ENCODE measurements at regions of chr4 and their contacts with region 1.

Region 1: GRCh38 chr4:154618708-154619315 is 6.4 kb upstream of the FGG start:
- DNase-seq: peak; percentile 63 to 83 (median 81)
- H3K4me3 ChIP-seq: no peak overlapping the region
- H3K27ac ChIP-seq: no peak overlapping the region
- H3K4me1 ChIP-seq: peaks cover 0 to 7% (median 4%) of the 10 kb centered on the region in 4 experiments
- H3K27me3 ChIP-seq: no peaks in the 10 kb centered on the region

Region 2: GRCh38 chr4:153822316-153822715 is 796.5 kb before region 1 on chr4:
- CTCF ChIA-PET with region 1: no interaction called
- POLR2A ChIA-PET with region 1: no interaction called
- DNase-seq: no peak
- H3K4me3 ChIP-seq: no peak overlapping the region
- H3K27ac ChIP-seq: no peak overlapping the region
- H3K4me1 ChIP-seq: no peaks in the 10 kb centered on the region
- H3K27me3 ChIP-seq: peaks cover 0 to 2% (median 1%) of the 10 kb centered on the region in 5 experiments

Region 3: GRCh38 chr4:154344686-154345085 is 274.1 kb before region 1 on chr4:
- CTCF ChIA-PET with region 1: no interaction called
- POLR2A ChIA-PET with region 1: no interaction called
- DNase-seq: no peak
- H3K4me3 ChIP-seq: no peak overlapping the region
- H3K27ac ChIP-seq: no peak overlapping the region
- H3K4me1 ChIP-seq: no peaks in the 10 kb centered on the region
- H3K27me3 ChIP-seq: no peaks in the 10 kb centered on the region

Region 4: GRCh38 chr4:154551872-154552686 is 66.7 kb before region 1 on chr4:
- CTCF ChIA-PET with region 1: interaction called, 495 read pairs
- POLR2A ChIA-PET with region 1: no interaction called
- DNase-seq: peak; percentile 78 to 89 (median 85)
- H3K4me3 ChIP-seq: no peak overlapping the region
- H3K27ac ChIP-seq: no peak overlapping the region
- H3K4me1 ChIP-seq: peaks cover 8 to 20% (median 12%) of the 10 kb centered on the region in 4 experiments
- H3K27me3 ChIP-seq: no peaks in the 10 kb centered on the region

Region 5: DNA sequence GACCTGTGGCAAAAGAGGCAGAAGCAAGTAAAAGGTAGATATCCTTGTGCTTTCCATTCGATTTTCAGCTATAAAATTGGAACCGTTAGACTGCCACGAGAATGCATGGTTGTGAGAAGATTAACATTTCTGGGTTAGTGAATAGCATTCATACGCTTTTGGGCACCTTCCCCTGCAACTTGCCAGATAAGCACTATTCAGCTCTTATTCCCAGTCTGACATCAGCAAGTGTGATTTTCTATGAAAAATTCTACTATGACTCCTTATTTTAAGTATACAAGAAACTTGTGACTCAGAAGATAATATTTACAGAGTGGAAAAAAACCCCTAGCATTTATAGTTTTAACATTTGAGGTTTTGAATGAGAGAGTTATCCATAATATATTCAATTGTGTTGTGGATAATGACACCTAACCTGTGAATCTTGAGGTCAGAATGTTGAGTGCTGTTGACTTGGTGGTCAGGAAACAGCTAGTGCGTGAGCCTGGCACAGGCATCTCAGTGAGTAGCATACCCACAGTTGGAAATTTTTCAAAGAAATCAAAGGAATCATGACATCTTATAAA is 52.1 kb before region 1 on chr4:
- CTCF ChIA-PET with region 1: interaction called, 495 read pairs
- POLR2A ChIA-PET with region 1: no interaction called
- DNase-seq: peak in 1 of 3 donors; percentile 49
- H3K4me3 ChIP-seq: no peak overlapping the region
- H3K27ac ChIP-seq: no peak overlapping the region
- H3K4me1 ChIP-seq: peaks cover 0 to 9% (median 1%) of the 10 kb centered on the region in 4 experiments
- H3K27me3 ChIP-seq: no peaks in the 10 kb centered on the region

Region 6: GRCh38 chr4:154642373-154643009 is 23.7 kb after region 1 on chr4:
- CTCF ChIA-PET with region 1: interaction called, 105 read pairs
- POLR2A ChIA-PET with region 1: no interaction called
- DNase-seq: no peak
- H3K4me3 ChIP-seq: no peak overlapping the region
- H3K27ac ChIP-seq: no peak overlapping the region
- H3K4me1 ChIP-seq: peaks cover 0 to 19% (median 5%) of the 10 kb centered on the region in 4 experiments
- H3K27me3 ChIP-seq: no peaks in the 10 kb centered on the region

Region 7: DNA sequence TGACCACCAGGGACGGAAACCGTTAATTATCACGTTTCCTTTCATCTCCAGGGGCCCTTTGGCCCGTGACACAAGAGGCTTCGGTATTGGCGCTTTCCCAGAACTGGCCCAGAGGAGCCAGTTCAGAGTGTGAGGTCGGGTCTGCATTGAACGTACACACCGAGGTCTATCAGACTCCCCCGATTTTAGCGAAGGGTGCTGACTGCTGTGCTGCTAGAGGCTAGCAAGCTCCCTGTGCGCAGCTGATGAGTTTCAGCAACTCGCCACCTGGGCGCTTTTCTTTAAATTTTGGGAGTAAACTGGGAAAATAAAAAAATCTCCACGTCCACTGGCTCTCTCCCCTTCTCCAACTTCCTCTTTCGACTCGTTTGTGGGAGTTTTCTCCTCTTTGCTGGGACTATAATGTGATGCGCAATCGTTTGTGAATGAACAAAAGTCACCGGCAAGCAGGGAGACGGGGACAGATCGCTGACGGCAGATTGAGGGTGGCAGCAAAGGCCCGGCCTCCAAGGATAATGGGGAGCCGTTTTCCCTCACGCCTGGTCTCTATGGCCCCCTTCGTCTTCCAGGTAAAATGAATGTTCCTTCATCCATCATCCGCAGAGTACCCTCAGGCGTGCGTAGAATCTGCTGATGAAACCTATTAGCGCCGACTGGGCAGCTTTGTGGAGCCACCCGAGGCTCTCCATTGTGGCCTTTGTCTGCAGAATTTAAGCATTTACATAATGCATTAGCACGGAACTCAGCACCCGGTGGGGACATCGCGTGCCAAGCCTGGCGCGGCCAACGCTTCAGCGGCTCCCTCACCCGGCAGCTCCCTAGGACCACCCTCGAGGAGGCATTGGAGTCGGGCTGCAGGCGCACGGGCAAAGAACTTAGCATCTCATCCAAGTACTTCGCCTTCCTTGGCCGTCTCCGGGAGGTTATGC is 123.4 kb after region 1 on chr4:
- CTCF ChIA-PET with region 1: no interaction called
- POLR2A ChIA-PET with region 1: no interaction called
- DNase-seq: peak; percentile 29 to 61 (median 52)
- H3K4me3 ChIP-seq: peak overlapping the region in 6 of 7 experiments; percentile 17 to 87 (median 58)
- H3K27ac ChIP-seq: no peak overlapping the region
- H3K4me1 ChIP-seq: peaks cover 0 to 33% (median 19%) of the 10 kb centered on the region in 4 experiments
- H3K27me3 ChIP-seq: peaks cover 22 to 68% (median 36%) of the 10 kb centered on the region in 5 experiments

Measured in common myeloid progenitor, CD34-positive (primary cell).